ENCODE measurements at regions of chr5 and their contacts with region 1.

Region 1: GRCh38 chr5:108079753-108080152 is 302.1 kb downstream of the FBXL17 start:
- DNase-seq: peak; percentile 13
- ATAC-seq: peak; percentile 79
- H3K4me3 ChIP-seq: no peak overlapping the region
- H3K27ac ChIP-seq: no peak overlapping the region
- H3K4me1 ChIP-seq: no peaks in the 10 kb centered on the region
- H3K27me3 ChIP-seq: no peaks in the 10 kb centered on the region
- CTCF ChIP-seq: peak; percentile 40

Region 2: DNA sequence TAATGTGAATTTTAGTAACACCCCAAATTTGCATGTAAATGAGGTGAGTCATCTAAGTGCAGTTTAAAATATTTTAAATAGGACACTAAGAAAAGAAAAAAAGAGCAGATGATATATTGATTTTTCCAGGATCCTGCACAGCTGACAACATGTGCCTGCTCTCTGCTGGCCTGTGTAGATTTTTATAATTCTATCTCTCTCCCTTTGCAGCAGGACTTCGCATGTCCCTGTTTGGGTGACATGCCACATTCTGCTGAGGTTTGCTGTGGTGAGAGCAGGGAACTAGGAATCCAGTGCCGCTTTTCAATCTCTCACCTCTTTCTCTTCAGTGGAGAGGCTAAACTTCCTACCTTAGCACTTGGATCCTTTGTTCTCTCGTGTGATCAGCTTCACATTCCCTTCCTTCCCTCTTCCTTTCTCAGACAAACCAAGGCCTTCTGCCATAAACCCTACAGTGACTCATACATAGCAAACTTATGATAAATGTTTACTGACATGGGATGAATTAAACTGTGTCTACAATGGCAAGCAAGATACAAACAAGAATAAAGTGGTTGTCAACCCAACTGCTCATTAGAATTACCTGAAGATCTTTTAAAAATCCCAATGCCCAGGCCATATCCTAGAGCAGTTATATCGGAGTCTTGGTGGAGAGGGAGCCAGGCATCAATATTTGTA is 210.2 kb before region 1 on chr5:
- CTCF ChIA-PET with region 1: no interaction called
- POLR2A ChIA-PET with region 1: no interaction called
- intact Hi-C with region 1: loop called (anchors 5 kb)
- DNase-seq: peak; percentile 96
- ATAC-seq: peak; percentile 93
- H3K4me3 ChIP-seq: peak overlapping the region; percentile 7; the same call in 1 of the 2 replicates
- H3K27ac ChIP-seq: peak overlapping the region; percentile 81
- H3K4me1 ChIP-seq: peaks cover 30% of the 10 kb centered on the region
- H3K27me3 ChIP-seq: no peaks in the 10 kb centered on the region
- CTCF ChIP-seq: no peak

Region 3: DNA sequence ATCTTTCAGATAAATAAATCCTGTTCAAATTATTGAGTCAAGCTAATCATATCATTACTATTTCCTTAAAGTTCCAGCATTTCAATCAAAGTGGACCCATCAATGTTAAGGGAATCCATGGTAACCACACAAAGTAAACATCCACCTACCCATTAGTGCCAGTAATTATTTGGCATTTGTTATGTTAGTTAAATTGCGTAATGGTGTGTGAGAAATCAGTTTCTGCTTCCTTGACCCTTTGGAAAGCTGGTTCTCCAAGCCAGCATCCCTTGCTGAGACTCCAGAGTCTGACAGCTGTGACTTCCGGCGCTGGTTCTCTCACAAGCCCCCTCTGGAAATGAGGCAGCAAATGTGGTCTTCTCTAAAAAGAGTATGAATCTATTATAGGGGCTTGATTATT is 100.5 kb before region 1 on chr5:
- CTCF ChIA-PET with region 1: no interaction called
- POLR2A ChIA-PET with region 1: no interaction called
- intact Hi-C with region 1: no loop called
- DNase-seq: no peak
- ATAC-seq: no peak
- H3K4me3 ChIP-seq: no peak overlapping the region
- H3K27ac ChIP-seq: no peak overlapping the region
- H3K4me1 ChIP-seq: no peaks in the 10 kb centered on the region
- H3K27me3 ChIP-seq: no peaks in the 10 kb centered on the region
- CTCF ChIP-seq: no peak

Region 4: GRCh38 chr5:108231417-108231816 is 151.7 kb after region 1 on chr5:
- CTCF ChIA-PET with region 1: no interaction called
- POLR2A ChIA-PET with region 1: no interaction called
- intact Hi-C with region 1: no loop called
- DNase-seq: no peak
- ATAC-seq: no peak
- H3K4me3 ChIP-seq: no peak overlapping the region
- H3K27ac ChIP-seq: no peak overlapping the region
- H3K4me1 ChIP-seq: peaks cover 10% of the 10 kb centered on the region
- H3K27me3 ChIP-seq: no peaks in the 10 kb centered on the region
- CTCF ChIP-seq: no peak

Region 5: DNA sequence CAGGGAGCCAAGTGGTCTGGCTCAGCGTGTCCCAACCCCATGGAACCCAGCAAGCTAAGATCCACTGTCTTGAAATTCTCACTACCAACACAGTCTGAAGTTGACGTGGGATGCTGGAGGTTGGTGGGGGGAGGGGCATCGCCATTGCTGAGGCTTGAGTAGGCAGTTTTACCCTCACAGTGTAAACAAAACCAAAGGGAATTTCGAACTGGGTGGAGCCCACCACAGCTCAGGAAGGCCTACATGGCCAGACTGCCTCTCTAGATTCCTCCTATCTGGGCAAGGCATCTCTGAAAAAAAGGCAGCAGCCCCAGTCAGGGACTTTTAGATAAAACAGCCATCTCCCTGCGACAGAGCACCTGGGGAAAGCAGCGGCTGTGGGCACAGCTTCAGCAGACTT is 319.2 kb after region 1 on chr5:
- CTCF ChIA-PET with region 1: no interaction called
- POLR2A ChIA-PET with region 1: no interaction called
- intact Hi-C with region 1: no loop called
- DNase-seq: no peak
- ATAC-seq: no peak
- H3K4me3 ChIP-seq: no peak overlapping the region
- H3K27ac ChIP-seq: no peak overlapping the region
- H3K4me1 ChIP-seq: no peaks in the 10 kb centered on the region
- H3K27me3 ChIP-seq: no peaks in the 10 kb centered on the region
- CTCF ChIP-seq: no peak